ENCODE measurements at regions of chr4 and their contacts with region 1.

Region 1: GRCh38 chr4:6815029-6815836 is 32.7 kb downstream of the KIAA0232 start:
- DNase-seq: no peak
- ATAC-seq: no peak
- H3K4me3 ChIP-seq: no peak overlapping the region
- H3K27ac ChIP-seq: no peak overlapping the region
- H3K4me1 ChIP-seq: no peaks in the 10 kb centered on the region; the same call in 1 of the 2 replicates
- H3K27me3 ChIP-seq: no peaks in the 10 kb centered on the region
- CTCF ChIP-seq: no peak

Region 2: GRCh38 chr4:7067452-7068278 is 252.4 kb after region 1 on chr4 and contains the start of gene GRPEL1:
- CTCF ChIA-PET with region 1: no interaction called
- POLR2A ChIA-PET with region 1: interaction called, 15 read pairs
- in situ Hi-C with region 1: no loop called
- intact Hi-C with region 1: no loop called
- DNase-seq: peak; percentile 95
- ATAC-seq: peak; percentile 94
- H3K4me3 ChIP-seq: peak within 1 kb of the TSS; percentile 77 to 84
- H3K27ac ChIP-seq: peak within 1 kb of the TSS; percentile 84
- H3K4me1 ChIP-seq: peaks cover 10% of the 10 kb centered on the region
- H3K27me3 ChIP-seq: no peaks in the 10 kb centered on the region
- CTCF ChIP-seq: no peak
- total RNA-seq, gene GRPEL1: 46.6 TPM